Lower leg skin (tissue), 4 donors: ENCODE measurements at regions of chr1 and their contacts with region 1.

Region 1: DNA sequence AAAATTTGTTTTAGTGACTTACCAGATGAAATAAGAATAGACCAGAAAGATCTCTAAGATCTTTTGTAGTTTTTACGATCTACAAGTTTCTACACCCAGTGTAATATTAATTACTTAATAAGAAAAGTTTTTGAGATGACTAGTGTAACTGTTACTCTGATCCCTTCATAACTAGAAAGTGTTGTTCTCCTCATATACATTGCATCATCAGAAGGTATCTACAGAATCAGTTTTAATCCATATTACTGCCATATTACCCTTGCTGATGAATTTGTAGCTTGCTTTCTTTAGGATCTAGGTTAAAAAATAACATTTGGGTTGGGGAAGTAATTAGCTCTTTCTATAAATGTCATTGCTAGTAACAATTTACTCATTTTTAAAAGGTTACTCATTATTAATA is 72.5 kb downstream of the GPR161 start:
- DNase-seq: no peak
- H3K4me3 ChIP-seq: no peak overlapping the region
- CTCF ChIP-seq: no peak
- POLR2A ChIP-seq: no peak

Region 2: GRCh38 chr1:167312871-167313270 is 751.3 kb before region 1 on chr1:
- intact Hi-C with region 1: loop called (anchors 5 kb)
- DNase-seq: no peak
- H3K4me3 ChIP-seq: no peak overlapping the region
- CTCF ChIP-seq: no peak
- POLR2A ChIP-seq: no peak